Cardiac septum (tissue), 1 donor: ENCODE measurements at regions of chr4 and their contacts with region 1.

Region 1: GRCh38 chr4:54840992-54841768 is 183.4 kb downstream of the KIT start:
- DNase-seq: no peak

Region 2: GRCh38 chr4:54322818-54323417 is 518.3 kb before region 1 on chr4:
- intact Hi-C with region 1: loop called (anchors 10 kb)
- DNase-seq: no peak

Region 3: GRCh38 chr4:54683616-54684346 is 157.4 kb before region 1 on chr4:
- intact Hi-C with region 1: loop called (anchors 10 kb)
- DNase-seq: no peak

Region 4: GRCh38 chr4:54754394-54754793 is 86.8 kb before region 1 on chr4:
- intact Hi-C with region 1: no loop called
- DNase-seq: no peak

Region 5: DNA sequence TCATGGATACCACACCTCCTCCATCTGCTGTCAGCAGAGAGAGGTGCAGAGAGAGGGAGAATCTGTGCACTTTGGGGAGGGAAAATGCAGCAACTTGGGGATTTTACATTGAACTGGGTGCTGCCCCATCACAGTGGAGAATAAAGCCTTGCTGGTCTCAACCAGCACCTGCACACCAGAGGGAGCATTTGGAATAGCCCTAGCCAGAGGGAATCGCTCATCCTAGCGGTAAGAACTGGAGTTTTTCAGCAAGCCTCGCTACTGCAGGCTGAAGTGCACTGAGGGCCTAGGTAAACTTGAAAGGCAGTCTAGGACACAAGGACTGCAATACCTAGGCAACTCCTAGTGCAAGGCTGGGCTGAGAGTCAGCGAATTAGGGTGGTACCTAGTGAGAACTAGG is 135.5 kb after region 1 on chr4:
- intact Hi-C with region 1: no loop called
- DNase-seq: no peak